IMR-90 (cell line): ENCODE measurements at regions of chr21 and their contacts with region 1.

Region 1: DNA sequence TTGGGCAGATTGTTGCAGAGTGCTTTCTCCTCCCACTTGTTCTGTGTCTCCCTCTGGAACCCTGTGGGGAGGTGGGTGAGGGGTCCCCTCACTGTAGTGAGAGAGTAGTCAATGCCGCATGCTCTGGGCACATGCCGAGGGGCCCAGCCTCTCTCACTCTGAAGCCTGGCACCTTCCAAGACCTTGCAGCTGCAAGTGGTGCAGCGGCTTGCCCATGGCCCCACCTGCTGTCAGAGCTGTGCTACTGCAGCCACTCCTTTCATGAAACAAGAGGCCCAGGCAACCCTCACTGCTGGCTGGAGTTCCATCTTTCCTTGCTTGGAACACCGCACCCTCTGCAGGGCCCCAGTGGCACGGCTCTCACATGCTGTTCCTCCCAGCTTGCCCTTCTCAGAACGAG is 58.4 kb upstream of the COL6A1 start:
- DNase-seq: peak; percentile 75
- ATAC-seq: peak; percentile 89
- H3K4me3 ChIP-seq: no peak overlapping the region
- H3K27ac ChIP-seq: no peak overlapping the region
- H3K4me1 ChIP-seq: peaks cover 13% of the 10 kb centered on the region
- H3K27me3 ChIP-seq: no peaks in the 10 kb centered on the region
- CTCF ChIP-seq: peak; percentile 86
- POLR2A ChIP-seq: no peak
- RAD21 ChIP-seq: peak; percentile 94

Region 2: DNA sequence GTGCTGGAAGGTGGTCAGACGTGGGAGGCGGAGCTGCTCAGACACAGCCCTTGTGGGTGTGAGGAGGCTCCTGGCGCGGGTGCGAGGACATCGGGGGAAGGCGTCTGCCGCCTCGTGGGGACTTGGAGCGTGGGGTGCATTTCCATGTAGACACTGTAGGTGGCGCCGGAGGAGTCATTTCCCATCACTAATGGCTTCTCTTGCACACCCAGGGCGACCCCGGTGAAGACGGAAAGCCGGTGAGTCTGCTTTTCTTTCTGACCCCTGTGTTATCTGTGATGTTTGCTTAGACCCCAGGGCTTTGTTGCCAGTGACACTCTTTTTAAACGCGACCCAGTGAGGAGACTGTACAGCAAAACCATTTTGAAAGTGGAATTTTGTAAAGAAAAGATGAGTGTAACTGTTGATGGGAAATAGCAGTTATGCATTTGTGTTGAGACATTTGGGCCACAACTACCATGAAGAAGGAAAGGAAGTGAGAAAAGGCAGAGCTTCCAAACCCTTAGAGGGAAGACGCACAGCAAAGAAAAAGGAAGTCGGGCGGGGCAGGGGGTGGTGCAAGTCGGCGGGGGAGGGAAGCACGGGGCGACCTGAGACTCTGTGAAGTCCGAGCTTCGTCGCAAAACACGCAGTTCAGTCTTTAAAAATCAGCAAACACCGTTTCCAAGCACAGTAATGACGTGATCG is 444.9 kb before region 1 on chr21:
- CTCF ChIA-PET with region 1: no interaction called
- POLR2A ChIA-PET with region 1: no interaction called
- dilution Hi-C with region 1: no loop called
- in situ Hi-C with region 1: no loop called
- intact Hi-C with region 1: loop called (anchors 5 kb)
- DNase-seq: peak; percentile 49
- ATAC-seq: peak; percentile 87
- H3K4me3 ChIP-seq: no peak overlapping the region
- H3K27ac ChIP-seq: peak overlapping the region; percentile 45; the same call in 1 of the 2 replicates
- H3K4me1 ChIP-seq: peaks cover 10% of the 10 kb centered on the region
- H3K27me3 ChIP-seq: no peaks in the 10 kb centered on the region
- CTCF ChIP-seq: peak; percentile 85
- POLR2A ChIP-seq: no peak
- RAD21 ChIP-seq: peak; percentile 53

Region 3: DNA sequence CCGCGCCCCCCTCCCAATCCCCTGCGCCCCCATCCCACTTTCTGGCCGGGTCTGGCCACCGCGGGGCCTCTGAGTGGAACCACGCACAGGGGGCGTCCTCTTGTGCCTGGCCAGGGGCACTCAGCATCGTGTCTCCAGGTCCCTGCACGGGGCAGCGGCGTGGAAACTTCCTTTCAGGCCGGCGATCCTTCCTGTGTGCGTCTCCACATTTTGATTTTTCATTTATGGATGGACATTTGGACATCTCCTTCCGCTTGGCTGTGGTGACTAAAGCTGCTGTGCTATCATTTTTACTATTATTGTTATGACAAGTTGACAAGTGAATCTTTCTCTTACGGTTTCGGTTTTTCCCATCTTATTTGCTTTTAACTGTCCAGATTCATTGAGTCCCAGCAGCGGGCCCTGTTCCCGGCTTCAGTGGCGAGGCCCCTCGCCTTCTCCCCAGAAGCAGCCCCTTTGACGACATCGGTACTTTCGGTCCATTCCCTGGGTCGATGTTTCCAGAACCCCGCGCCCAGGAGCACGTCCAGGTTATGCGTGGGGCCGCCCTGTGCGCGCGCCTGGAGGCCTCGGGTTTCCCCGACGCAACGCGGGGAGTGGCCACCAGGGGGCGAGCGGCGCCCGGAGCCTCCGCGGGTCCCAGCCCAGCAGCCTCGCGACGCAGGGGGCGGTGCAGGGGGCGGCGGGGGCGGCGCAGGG is 368.5 kb before region 1 on chr21:
- CTCF ChIA-PET with region 1: interaction called, 4 read pairs
- POLR2A ChIA-PET with region 1: no interaction called
- dilution Hi-C with region 1: no loop called
- in situ Hi-C with region 1: no loop called
- intact Hi-C with region 1: loop called (anchors 1 kb)
- DNase-seq: peak; percentile 48
- ATAC-seq: peak; percentile 83
- H3K4me3 ChIP-seq: peak overlapping the region; percentile 84
- H3K27ac ChIP-seq: peak overlapping the region; percentile 56
- H3K4me1 ChIP-seq: peaks cover 2% of the 10 kb centered on the region; the same call in 1 of the 2 replicates
- H3K27me3 ChIP-seq: no peaks in the 10 kb centered on the region
- CTCF ChIP-seq: peak; percentile 78
- POLR2A ChIP-seq: peak; percentile 32; the same call in 1 of the 2 replicates
- RAD21 ChIP-seq: peak; percentile 60

Region 4: GRCh38 chr21:45560106-45561021 is 362.8 kb before region 1 on chr21:
- CTCF ChIA-PET with region 1: interaction called, 4 read pairs
- POLR2A ChIA-PET with region 1: no interaction called
- dilution Hi-C with region 1: no loop called
- in situ Hi-C with region 1: loop called (anchors 10 kb)
- intact Hi-C with region 1: loop called (anchors 1 kb)
- DNase-seq: no peak
- ATAC-seq: no peak
- H3K4me3 ChIP-seq: no peak overlapping the region
- H3K27ac ChIP-seq: no peak overlapping the region
- H3K4me1 ChIP-seq: peaks cover 9% of the 10 kb centered on the region
- H3K27me3 ChIP-seq: no peaks in the 10 kb centered on the region; the same call in 1 of the 2 replicates
- CTCF ChIP-seq: no peak
- POLR2A ChIP-seq: no peak
- RAD21 ChIP-seq: no peak

Region 5: DNA sequence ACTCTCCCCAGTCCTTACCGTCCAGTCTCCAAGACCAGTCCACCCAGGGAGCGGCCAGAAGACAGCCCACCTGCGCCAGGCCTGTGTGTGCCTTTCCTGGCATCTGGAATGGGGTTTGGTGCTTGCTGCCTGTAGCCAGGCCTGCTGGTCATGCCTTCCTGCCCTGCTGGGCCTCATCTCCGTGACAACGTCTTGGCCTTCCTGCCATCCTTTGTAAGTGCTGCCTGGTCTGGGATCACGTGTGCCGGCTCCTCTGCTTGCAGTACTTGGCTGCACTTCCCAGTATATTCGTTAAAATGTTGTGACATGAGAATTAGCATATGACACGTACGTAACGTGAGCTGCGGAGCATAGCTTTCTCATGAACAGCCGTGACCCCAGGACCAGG is 86.9 kb before region 1 on chr21:
- CTCF ChIA-PET with region 1: interaction called, 5 read pairs
- POLR2A ChIA-PET with region 1: no interaction called
- dilution Hi-C with region 1: no loop called
- in situ Hi-C with region 1: no loop called
- intact Hi-C with region 1: loop called (anchors 5 kb)
- DNase-seq: peak; percentile 61
- ATAC-seq: no peak
- H3K4me3 ChIP-seq: no peak overlapping the region
- H3K27ac ChIP-seq: no peak overlapping the region
- H3K4me1 ChIP-seq: peaks cover 16% of the 10 kb centered on the region
- H3K27me3 ChIP-seq: no peaks in the 10 kb centered on the region
- CTCF ChIP-seq: no peak
- POLR2A ChIP-seq: no peak
- RAD21 ChIP-seq: no peak

Region 6: DNA sequence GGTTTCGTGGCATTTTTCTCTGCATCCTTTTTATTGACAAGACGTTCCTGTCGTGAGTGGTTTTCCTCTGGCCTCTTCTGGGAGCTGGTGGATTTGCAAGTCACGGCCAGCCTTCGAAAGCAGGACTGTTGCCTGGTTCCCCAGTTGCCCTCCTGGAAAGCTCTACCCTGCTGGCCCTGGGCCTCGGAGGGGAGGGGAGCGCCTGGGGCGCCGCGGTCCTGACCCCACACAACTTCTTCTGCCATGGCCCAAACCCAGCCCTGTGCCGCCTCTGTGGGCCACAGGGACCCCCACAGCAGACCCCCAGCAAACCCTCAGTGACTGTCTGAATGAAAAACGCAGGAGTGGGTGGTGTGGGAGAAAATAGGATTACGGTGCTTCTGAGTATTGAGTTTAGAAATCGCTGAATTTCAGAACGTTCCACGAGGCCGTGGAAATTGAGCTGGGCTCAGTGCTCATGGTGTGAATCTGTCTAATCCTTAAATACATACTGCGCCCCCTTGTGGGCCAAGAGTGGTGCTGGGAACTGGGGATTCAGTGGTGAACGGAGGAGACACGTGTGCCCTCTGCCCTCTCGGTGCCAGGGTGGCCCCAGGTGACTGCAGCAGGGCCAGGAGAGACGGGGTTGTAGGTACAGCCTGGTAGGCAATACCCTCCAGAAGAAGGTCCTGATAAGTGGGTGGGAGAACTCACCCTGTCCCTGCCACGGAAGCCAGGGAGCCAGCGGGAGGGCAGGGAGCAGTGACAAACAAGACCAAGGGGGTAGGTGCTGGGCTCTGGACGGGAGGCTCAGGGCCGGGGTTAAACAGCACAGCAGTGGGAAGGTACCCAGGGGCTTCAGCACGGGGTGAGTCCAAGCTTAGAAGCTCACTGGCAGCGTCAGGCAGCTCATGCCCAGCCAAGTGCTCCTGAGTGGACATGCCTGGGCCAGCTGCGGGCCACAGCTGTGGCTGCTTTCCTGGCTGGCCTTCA is 42.8 kb before region 1 on chr21:
- CTCF ChIA-PET with region 1: no interaction called
- POLR2A ChIA-PET with region 1: no interaction called
- dilution Hi-C with region 1: no loop called
- in situ Hi-C with region 1: no loop called
- intact Hi-C with region 1: loop called (anchors 5 kb)
- DNase-seq: peak; percentile 58
- ATAC-seq: peak; percentile 64
- H3K4me3 ChIP-seq: no peak overlapping the region
- H3K27ac ChIP-seq: no peak overlapping the region
- H3K4me1 ChIP-seq: peaks cover 34% of the 10 kb centered on the region
- H3K27me3 ChIP-seq: no peaks in the 10 kb centered on the region
- CTCF ChIP-seq: peak; percentile 56
- POLR2A ChIP-seq: no peak
- RAD21 ChIP-seq: peak; percentile 51

Region 7: DNA sequence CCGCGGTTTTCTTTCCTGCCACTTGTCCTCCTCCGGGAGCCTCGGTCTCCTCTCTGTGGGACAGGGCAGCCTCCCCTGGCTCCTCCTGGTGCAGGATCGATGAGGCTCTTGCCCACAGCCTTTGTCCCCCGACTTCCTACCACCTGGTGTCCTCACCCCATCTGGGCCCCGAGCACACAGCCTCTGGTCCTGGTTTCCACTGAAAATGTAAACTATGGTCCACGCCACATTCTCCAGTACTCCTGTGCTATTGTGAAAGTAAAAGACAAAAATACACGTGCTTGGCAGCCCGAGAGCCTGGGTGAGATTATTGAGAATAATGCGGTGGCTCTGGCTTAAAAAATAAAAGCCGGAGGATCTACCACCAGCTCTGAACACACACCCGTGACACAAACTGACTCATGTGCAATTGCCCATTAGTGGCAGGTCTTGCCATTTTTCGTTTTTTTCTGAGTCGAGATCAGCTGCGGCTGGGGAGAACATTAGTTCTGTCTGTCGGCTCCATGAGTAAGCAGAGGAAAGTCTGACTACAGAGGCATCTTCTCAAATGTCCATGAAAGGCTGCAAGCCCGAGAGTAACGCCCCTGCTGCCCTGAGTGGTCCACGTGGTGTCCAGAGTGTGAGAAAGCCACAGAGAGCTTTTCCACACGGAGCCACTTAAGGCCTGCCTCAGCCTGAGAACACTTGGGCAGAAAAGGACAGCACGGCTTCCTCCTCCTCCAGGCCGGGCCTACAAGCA is 169.0 kb after region 1 on chr21:
- CTCF ChIA-PET with region 1: no interaction called
- POLR2A ChIA-PET with region 1: no interaction called
- dilution Hi-C with region 1: no loop called
- in situ Hi-C with region 1: no loop called
- intact Hi-C with region 1: no loop called
- DNase-seq: peak; percentile 99
- ATAC-seq: peak; percentile 86
- H3K4me3 ChIP-seq: peak overlapping the region; percentile 28
- H3K27ac ChIP-seq: peak overlapping the region; percentile 92
- H3K4me1 ChIP-seq: peaks cover 24% of the 10 kb centered on the region
- H3K27me3 ChIP-seq: no peaks in the 10 kb centered on the region
- CTCF ChIP-seq: 0 out of 2 replicates have a peak, but pooled peaks have one; percentile 0
- POLR2A ChIP-seq: peak; percentile 76
- RAD21 ChIP-seq: peak; percentile 22; the same call in 1 of the 2 replicates

Region 8: DNA sequence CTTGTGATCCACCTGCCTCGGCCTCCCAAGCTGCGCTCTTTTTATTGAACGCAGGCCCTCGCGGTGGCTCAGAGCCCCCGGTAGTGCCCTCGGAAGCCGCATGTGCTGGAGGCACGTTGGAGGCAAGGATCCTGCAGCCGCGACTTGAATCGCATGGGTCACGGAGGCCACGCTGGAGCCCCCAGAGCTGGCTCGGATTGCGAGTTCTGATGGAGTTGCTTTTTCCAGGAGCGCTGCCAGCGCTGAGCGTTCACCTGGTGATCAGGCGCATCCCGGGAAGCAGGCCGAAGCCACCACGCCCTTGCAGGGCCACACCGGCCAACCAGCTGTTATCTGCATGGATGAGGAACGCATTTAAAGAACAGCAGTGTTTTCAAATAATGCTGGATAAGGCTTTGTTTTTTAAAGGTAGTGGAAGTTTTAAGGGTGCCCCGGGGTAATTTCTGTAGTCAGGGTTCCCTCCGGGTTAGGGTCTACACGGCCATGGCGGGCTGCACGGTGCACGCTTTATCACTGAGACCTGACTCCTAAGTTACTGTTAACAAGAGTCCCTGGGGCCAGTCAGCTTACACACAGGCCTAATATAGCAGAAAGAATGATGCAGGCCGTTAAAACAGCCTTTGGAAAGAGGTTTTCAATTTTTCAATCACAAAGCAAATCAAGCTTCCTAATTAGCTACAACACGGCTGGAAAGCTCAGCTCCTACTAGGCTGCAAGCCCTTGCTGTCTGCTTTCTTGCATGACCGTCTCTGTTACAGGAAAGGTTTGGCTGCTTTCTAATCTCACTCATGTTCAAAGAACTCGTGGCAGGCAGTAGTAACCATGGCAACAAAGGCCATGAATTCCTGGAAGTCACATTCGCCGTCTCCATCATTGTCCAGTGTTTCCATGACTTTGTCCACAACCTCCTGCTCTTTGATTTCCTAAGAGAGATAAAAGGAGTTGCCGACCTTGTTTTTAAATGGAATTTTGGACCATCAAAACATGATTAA is 675.7 kb after region 1 on chr21:
- CTCF ChIA-PET with region 1: no interaction called
- POLR2A ChIA-PET with region 1: no interaction called
- dilution Hi-C with region 1: no loop called
- in situ Hi-C with region 1: no loop called
- intact Hi-C with region 1: no loop called
- DNase-seq: peak; percentile 92
- ATAC-seq: peak; percentile 84
- H3K4me3 ChIP-seq: no peak overlapping the region
- H3K27ac ChIP-seq: peak overlapping the region; percentile 12; the same call in 1 of the 2 replicates
- H3K4me1 ChIP-seq: peaks cover 6% of the 10 kb centered on the region
- H3K27me3 ChIP-seq: no peaks in the 10 kb centered on the region
- CTCF ChIP-seq: no peak
- POLR2A ChIP-seq: no peak
- RAD21 ChIP-seq: no peak